ENCODE measurements at regions of chr2 and their contacts with region 1.

Region 1: GRCh38 chr2:215982080-215982875 is 31.1 kb downstream of the MREG start:
- DNase-seq: no peak
- H3K4me3 Mint-ChIP-seq: no peak overlapping the region
- H3K27ac Mint-ChIP-seq: peak overlapping the region; percentile 56
- H3K4me1 Mint-ChIP-seq: peaks cover 32% of the 10 kb centered on the region
- H3K27me3 Mint-ChIP-seq: no peaks in the 10 kb centered on the region

Region 2: DNA sequence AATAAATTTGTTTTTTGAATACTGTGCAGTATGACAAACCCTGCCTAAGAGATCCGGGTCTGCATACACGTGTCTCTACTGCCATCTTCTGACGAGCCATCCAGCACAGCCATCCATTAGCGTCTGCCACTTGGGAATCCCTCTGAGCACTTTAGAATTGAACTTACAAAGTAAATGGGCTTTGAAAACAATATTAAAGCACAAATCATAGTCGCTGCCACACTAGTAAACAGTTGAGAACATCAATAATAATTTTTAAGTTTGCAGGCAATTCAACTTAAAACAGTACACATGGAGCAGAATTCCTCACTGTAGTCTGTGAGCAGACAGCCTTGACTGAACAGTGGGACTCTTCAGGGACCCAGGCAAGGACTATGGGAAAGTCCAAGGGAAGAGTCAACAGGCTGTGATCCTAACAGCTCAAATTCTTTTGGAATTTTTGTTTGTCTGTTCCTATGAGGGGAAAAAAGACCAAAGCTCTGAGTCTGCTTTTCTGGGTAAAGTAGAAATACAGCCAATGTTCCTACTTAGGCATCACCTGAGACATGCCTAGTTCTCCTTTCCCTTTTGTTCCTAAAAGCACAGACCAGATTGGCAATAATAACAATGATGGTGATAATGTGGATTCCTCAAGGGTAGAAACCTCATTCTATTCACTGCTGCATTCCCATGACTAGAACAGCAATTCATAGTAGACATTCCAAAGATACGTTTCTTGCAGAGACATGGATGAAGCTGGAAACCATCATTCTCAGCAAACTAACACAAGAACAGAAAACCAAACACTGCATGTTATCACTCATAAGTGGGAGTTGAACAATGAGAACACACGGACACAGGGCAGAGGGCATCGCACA is 61.8 kb before region 1 on chr2:
- intact Hi-C with region 1: no loop called
- DNase-seq: peak; percentile 38
- H3K4me3 Mint-ChIP-seq: no peak overlapping the region
- H3K27ac Mint-ChIP-seq: no peak overlapping the region
- H3K4me1 Mint-ChIP-seq: peaks cover 21% of the 10 kb centered on the region
- H3K27me3 Mint-ChIP-seq: no peaks in the 10 kb centered on the region

Region 3: GRCh38 chr2:215949991-215950404 is 32.3 kb before region 1 on chr2:
- intact Hi-C with region 1: no loop called
- DNase-seq: no peak
- H3K4me3 Mint-ChIP-seq: no peak overlapping the region
- H3K27ac Mint-ChIP-seq: no peak overlapping the region
- H3K4me1 Mint-ChIP-seq: peaks cover 9% of the 10 kb centered on the region
- H3K27me3 Mint-ChIP-seq: no peaks in the 10 kb centered on the region

Region 4: GRCh38 chr2:215969131-215969841 is 13.0 kb before region 1 on chr2:
- intact Hi-C with region 1: loop called (anchors 2 kb)
- DNase-seq: no peak
- H3K4me3 Mint-ChIP-seq: no peak overlapping the region
- H3K27ac Mint-ChIP-seq: no peak overlapping the region
- H3K4me1 Mint-ChIP-seq: peaks cover 48% of the 10 kb centered on the region
- H3K27me3 Mint-ChIP-seq: no peaks in the 10 kb centered on the region

Region 5: GRCh38 chr2:216006164-216006663 is 23.9 kb after region 1 on chr2:
- intact Hi-C with region 1: loop called (anchors 1 kb)
- DNase-seq: peak; percentile 27
- H3K4me3 Mint-ChIP-seq: peak overlapping the region; percentile 62
- H3K27ac Mint-ChIP-seq: peak overlapping the region; percentile 96
- H3K4me1 Mint-ChIP-seq: peaks cover 47% of the 10 kb centered on the region
- H3K27me3 Mint-ChIP-seq: no peaks in the 10 kb centered on the region

Region 6: DNA sequence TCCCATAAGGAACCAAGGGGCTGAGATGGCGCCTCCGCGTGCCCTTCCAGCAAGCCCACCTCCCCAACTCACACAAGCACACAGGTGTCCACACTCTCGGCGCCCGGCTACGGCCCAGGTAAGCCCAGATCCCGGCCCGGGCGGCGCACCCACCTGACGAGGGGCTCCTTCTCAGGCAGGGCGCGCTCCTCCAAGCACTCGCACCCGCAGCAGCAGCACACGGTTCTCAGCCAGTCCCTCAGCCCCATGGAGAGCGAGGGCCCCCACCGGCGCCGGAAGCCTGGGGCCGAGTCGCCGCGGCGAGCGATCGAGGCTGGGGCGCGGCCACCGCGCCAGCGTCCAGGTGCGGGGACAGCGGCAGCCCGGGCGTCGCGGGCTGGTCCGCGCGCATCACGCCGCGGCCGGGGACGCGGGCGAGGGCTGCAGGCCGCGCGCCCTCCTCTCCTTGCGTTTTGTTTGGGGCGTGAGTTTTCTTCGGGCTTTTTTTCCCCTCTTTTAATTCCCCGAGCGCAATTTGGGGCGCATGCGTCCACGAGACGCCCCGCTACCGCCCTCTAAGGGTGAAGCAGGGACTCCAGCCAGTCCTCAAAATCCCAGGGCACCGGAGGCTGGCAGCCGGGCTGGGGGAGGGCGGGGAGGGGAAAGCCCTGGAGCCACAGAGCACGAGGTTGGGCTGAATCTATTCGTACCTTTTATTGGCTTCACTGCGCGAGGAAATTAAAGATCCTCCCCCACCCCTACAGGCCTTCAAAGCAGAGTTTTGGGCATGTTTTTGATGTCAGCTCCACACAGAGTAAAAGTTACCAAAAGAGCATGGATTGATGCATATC is 31.0 kb after region 1 on chr2 and contains the start of gene MREG:
- intact Hi-C with region 1: loop called (anchors 1 kb)
- DNase-seq: peak; percentile 79
- H3K4me3 Mint-ChIP-seq: peak within 1 kb of the TSS; percentile 90
- H3K27ac Mint-ChIP-seq: peak within 1 kb of the TSS; percentile 62
- H3K4me1 Mint-ChIP-seq: peaks cover 51% of the 10 kb centered on the region
- H3K27me3 Mint-ChIP-seq: no peaks in the 10 kb centered on the region
- total RNA-seq, gene MREG: 15.3 and 15.7 TPM in 2 replicates